Activated naive CD4-positive, alpha-beta T cell treated with anti-CD3 and anti-CD28 coated beads, Interleukin-2, amount 10 ng/mL, durations not matched to agents 7 days and 5 days (primary cell): ENCODE measurements at regions of chr5 and their contacts with region 1.

Region 1: GRCh38 chr5:151126199-151126645 is 31.4 kb downstream of the ANXA6 start:
- DNase-seq: peak; percentile 71
- H3K4me3 Mint-ChIP-seq: no peak overlapping the region
- H3K27ac Mint-ChIP-seq: peak overlapping the region; percentile 84
- H3K4me1 Mint-ChIP-seq: peaks cover 42% of the 10 kb centered on the region
- H3K27me3 Mint-ChIP-seq: no peaks in the 10 kb centered on the region

Region 2: DNA sequence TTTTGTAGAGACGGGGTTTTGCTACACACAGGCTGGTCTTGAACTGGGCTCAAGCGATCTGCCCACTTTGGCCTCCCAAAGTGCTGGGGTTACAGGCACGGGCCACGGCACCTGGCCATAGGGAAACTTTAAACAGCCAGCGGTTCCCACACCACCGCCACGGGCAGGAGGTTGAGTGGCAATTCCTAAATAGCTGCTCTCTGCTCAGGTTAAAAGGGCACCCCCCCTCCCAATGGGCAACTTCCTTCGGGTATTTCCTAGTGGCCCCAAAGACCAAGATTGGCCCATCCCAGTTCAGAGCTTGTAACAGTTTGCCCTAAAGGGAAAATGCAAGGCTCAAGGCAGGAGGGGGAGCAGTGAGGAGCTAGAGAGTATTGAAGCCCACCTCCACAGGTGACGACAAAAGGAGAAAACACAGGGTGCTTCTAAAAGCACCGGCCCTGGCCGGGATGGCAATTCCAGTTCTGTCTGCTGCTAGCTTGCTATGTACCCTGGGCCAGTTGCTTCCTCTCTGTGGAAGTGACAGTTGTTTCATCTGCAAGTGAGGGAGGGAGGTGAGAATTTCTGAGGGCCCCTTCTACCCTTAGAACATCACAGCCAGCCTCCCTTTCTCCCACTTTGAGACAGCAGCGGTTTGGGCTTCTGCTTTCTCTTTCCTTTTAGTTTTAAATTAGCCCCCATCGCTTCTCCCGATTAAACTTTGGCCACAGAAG is 28.3 kb before region 1 on chr5:
- CTCF ChIA-PET with region 1: interaction called, 10 read pairs
- DNase-seq: peak; percentile 35
- H3K4me3 Mint-ChIP-seq: no peak overlapping the region
- H3K27ac Mint-ChIP-seq: peak overlapping the region; percentile 61
- H3K4me1 Mint-ChIP-seq: peaks cover 78% of the 10 kb centered on the region
- H3K27me3 Mint-ChIP-seq: no peaks in the 10 kb centered on the region

Region 3: DNA sequence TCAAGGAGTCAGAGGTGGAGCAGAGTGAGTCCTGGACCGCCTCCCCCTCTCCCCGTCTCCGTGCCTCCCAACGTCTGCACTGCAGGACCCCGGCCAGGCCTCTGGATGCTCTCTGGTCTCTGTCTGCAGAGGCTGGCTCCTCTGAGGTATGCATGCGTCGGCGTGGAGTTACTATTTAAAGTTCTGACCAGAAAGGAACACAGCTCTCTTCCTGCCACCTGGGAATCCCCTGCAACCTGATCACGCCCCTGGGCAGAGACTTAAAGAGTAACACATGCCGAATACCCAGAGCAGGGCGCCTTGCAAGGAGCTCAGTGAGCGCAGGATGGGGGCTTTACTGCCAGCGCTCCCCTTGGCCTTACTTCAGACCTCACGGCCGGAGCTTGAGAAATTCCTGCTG is 15.3 kb after region 1 on chr5:
- CTCF ChIA-PET with region 1: interaction called, 21 read pairs
- DNase-seq: peak; percentile 71
- H3K4me3 Mint-ChIP-seq: peak overlapping the region; percentile 53
- H3K27ac Mint-ChIP-seq: peak overlapping the region; percentile 53
- H3K4me1 Mint-ChIP-seq: peaks cover 96% of the 10 kb centered on the region
- H3K27me3 Mint-ChIP-seq: no peaks in the 10 kb centered on the region

Region 4: GRCh38 chr5:151150471-151151262 is 24.4 kb after region 1 on chr5:
- CTCF ChIA-PET with region 1: interaction called, 48 read pairs
- DNase-seq: peak; percentile 87
- H3K4me3 Mint-ChIP-seq: peak overlapping the region; percentile 57
- H3K27ac Mint-ChIP-seq: peak overlapping the region; percentile 94
- H3K4me1 Mint-ChIP-seq: peaks cover 100% of the 10 kb centered on the region
- H3K27me3 Mint-ChIP-seq: no peaks in the 10 kb centered on the region

Region 5: GRCh38 chr5:151157426-151158286 is 31.4 kb after region 1 on chr5 and contains the start of gene ANXA6:
- CTCF ChIA-PET with region 1: interaction called, 366 read pairs
- DNase-seq: peak; percentile 80
- H3K4me3 Mint-ChIP-seq: peak within 1 kb of the TSS; percentile 98
- H3K27ac Mint-ChIP-seq: peak within 1 kb of the TSS; percentile 95
- H3K4me1 Mint-ChIP-seq: peaks cover 51% of the 10 kb centered on the region
- H3K27me3 Mint-ChIP-seq: no peaks in the 10 kb centered on the region

Region 6: DNA sequence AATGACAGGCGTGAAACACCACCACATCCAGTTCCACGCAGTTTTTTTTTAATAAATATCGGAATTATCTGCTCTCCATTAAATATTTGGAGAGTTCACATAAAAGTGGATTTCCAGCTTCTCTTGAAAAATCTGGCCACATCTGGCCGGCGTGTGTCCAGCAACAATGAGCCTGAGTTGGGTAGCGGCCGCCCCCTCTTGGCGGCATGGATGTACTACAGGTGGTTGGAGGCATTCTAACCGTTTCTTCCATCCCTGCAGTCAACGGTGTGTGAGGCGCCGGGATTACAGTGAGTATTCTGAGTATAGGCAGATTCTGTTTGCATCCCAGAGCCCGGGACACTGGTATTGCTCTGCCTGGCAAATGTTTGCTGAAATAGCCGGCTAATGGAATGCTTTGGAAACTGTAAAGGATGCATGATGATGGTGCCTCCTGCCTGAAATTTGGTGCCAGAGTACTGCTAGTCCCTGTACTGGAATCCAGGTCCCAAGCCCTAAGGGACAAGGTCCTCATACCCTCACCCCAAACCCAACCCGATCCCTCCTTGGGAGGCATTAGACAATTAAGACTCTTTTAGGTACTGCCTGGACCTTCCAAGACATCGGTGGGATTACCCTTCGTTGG is 113.1 kb after region 1 on chr5:
- CTCF ChIA-PET with region 1: interaction called, 27 read pairs
- DNase-seq: peak; percentile 65
- H3K4me3 Mint-ChIP-seq: no peak overlapping the region
- H3K27ac Mint-ChIP-seq: no peak overlapping the region
- H3K4me1 Mint-ChIP-seq: peaks cover 30% of the 10 kb centered on the region
- H3K27me3 Mint-ChIP-seq: no peaks in the 10 kb centered on the region